Calu3 (cell line): ENCODE measurements at regions of chr3 and their contacts with region 1.

Region 1: DNA sequence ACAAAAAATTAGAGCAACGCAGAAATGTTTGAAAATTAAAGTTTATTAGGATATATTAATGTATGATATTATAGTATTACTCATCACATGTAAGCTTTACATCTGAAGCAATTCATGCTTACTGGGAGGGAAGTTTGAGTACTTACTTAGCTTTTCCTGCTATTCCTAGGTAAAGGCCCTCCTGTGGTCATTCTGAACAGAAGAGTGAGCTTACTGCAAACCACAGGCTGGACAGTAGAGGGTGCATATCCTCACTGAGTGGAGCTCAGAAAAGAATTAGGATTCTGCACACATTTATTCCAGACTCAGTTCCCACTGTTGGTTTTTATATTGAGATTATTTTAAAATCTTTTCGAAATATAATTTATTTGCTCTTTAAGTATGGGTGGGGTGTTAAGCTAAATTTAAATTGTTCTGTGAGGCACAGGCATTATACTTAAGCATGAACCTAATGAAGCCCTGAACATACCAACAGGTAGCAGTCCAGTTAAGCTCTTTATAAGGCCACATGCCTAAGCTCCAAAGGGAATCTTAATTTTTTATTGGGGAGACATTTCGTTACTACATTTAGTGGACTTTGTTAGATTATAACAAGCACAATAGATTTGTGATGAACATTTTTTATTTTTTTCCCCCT is 10.2 kb downstream of the MRPS22 start:
- DNase-seq: peak; percentile 70
- H3K4me3 Mint-ChIP-seq: no peak overlapping the region
- H3K27ac Mint-ChIP-seq: no peak overlapping the region
- H3K4me1 Mint-ChIP-seq: no peaks in the 10 kb centered on the region
- H3K27me3 Mint-ChIP-seq: no peaks in the 10 kb centered on the region
- CTCF ChIP-seq: peak; percentile 78

Region 2: GRCh38 chr3:139088462-139089324 is 265.3 kb before region 1 on chr3:
- CTCF ChIA-PET with region 1: no interaction called
- intact Hi-C with region 1: no loop called
- DNase-seq: no peak
- H3K4me3 Mint-ChIP-seq: no peak overlapping the region
- H3K27ac Mint-ChIP-seq: no peak overlapping the region
- H3K4me1 Mint-ChIP-seq: no peaks in the 10 kb centered on the region
- H3K27me3 Mint-ChIP-seq: peaks cover 12% of the 10 kb centered on the region
- CTCF ChIP-seq: no peak

Region 3: GRCh38 chr3:139364549-139364948 is 10.5 kb after region 1 on chr3:
- CTCF ChIA-PET with region 1: interaction called, 16 read pairs
- intact Hi-C with region 1: no loop called
- DNase-seq: no peak
- H3K4me3 Mint-ChIP-seq: no peak overlapping the region
- H3K27ac Mint-ChIP-seq: no peak overlapping the region
- H3K4me1 Mint-ChIP-seq: peaks cover 8% of the 10 kb centered on the region
- H3K27me3 Mint-ChIP-seq: no peaks in the 10 kb centered on the region
- CTCF ChIP-seq: no peak

Region 4: GRCh38 chr3:139389458-139390209 is 35.6 kb after region 1 on chr3 and contains the start of gene COPB2:
- CTCF ChIA-PET with region 1: interaction called, 10 read pairs
- intact Hi-C with region 1: no loop called
- DNase-seq: peak; percentile 100
- H3K4me3 Mint-ChIP-seq: peak within 1 kb of the TSS; percentile 84
- H3K27ac Mint-ChIP-seq: peak within 1 kb of the TSS; percentile 97
- H3K4me1 Mint-ChIP-seq: peaks cover 24% of the 10 kb centered on the region
- H3K27me3 Mint-ChIP-seq: no peaks in the 10 kb centered on the region
- CTCF ChIP-seq: no peak
- total RNA-seq, gene COPB2: 219 and 223 TPM in 2 replicates

Region 5: GRCh38 chr3:139414608-139415224 is 60.7 kb after region 1 on chr3:
- CTCF ChIA-PET with region 1: no interaction called
- intact Hi-C with region 1: no loop called
- DNase-seq: no peak
- H3K4me3 Mint-ChIP-seq: no peak overlapping the region
- H3K27ac Mint-ChIP-seq: no peak overlapping the region
- H3K4me1 Mint-ChIP-seq: peaks cover 12% of the 10 kb centered on the region
- H3K27me3 Mint-ChIP-seq: no peaks in the 10 kb centered on the region
- CTCF ChIP-seq: no peak

Region 6: GRCh38 chr3:139427283-139427993 is 73.4 kb after region 1 on chr3:
- CTCF ChIA-PET with region 1: no interaction called
- intact Hi-C with region 1: no loop called
- DNase-seq: peak; percentile 73
- H3K4me3 Mint-ChIP-seq: no peak overlapping the region
- H3K27ac Mint-ChIP-seq: no peak overlapping the region
- H3K4me1 Mint-ChIP-seq: no peaks in the 10 kb centered on the region
- H3K27me3 Mint-ChIP-seq: no peaks in the 10 kb centered on the region
- CTCF ChIP-seq: peak; percentile 83

Region 7: GRCh38 chr3:139561959-139562676 is 208.1 kb after region 1 on chr3:
- CTCF ChIA-PET with region 1: interaction called, 5 read pairs
- intact Hi-C with region 1: loop called (anchors 1 kb)
- DNase-seq: peak; percentile 71
- H3K4me3 Mint-ChIP-seq: no peak overlapping the region
- H3K27ac Mint-ChIP-seq: no peak overlapping the region
- H3K4me1 Mint-ChIP-seq: peaks cover 36% of the 10 kb centered on the region
- H3K27me3 Mint-ChIP-seq: no peaks in the 10 kb centered on the region
- CTCF ChIP-seq: peak; percentile 81

Region 8: DNA sequence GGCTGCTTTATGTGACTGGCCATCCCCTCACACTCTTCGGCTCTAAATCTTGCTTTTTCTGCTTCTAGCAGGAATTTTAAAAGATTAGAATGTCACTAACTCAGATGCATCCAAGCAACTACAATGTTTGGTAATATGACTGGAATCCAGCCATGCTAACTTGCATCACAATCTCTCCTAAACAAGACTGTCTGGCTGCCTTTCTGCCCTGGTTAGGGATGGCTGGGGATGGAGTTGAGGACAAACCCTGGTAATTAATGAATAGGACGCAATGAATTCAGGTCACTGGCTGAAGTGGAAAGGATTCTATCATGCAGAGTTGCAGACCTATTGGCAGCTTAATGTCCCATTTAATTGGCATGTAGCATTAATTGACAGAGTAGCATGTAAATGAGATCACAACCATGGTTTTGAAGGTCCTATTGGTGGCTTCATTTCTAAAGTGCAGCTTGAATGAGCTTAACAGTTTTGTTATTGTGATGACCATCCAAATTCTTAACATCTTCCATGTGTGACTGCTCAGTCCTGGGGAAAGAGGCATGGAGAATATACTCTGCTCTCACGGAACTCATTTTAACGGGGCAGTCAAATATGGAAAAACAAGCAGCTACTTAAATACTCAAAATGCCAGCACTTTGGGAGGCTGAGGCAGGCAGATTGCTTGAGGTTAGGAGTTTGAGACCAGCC is 302.0 kb after region 1 on chr3:
- CTCF ChIA-PET with region 1: no interaction called
- intact Hi-C with region 1: no loop called
- DNase-seq: no peak
- H3K4me3 Mint-ChIP-seq: no peak overlapping the region
- H3K27ac Mint-ChIP-seq: no peak overlapping the region
- H3K4me1 Mint-ChIP-seq: peaks cover 20% of the 10 kb centered on the region
- H3K27me3 Mint-ChIP-seq: no peaks in the 10 kb centered on the region
- CTCF ChIP-seq: no peak